Natural killer cell (primary cell): ENCODE measurements at regions of chr11 and their contacts with region 1.

Region 1: DNA sequence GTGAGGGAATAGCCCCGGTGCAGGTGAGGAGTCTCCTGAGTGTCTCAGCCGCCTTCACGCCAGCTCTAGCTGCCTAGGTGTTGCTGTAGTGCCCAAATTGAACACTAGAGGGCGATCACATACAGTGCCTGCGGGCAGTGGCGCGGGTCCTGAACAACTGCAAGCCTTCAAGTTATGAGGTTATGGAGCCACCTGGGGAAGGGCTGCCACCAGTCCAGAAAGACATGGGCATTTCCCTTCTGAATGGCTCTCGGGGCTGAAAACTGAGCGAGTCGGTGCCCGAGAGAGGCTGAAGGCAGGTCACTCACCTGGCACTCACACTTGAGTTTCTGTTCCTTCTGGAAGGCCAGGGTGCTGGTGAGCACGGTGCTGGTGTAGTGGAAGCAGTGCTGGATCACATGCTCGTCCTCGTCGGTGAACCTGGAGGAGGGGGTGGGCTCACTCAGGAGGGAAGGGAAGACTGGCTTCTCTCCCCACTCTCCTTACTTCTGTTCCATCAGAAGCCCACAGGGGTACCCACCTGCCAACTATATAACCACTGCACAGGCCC is 88.4 kb downstream of the PDE2A start:
- DNase-seq: peak; percentile 57 to 89
- ATAC-seq: peak; percentile 78 to 82 (median 79)
- H3K4me3 ChIP-seq: no peak overlapping the region
- H3K4me3 Mint-ChIP-seq: peak overlapping the region; percentile 87
- H3K27ac ChIP-seq: no peak overlapping the region
- H3K27ac Mint-ChIP-seq: peak overlapping the region in 1 of 2 donors; percentile 86
- H3K4me1 ChIP-seq: peaks cover 36% of the 10 kb centered on the region
- H3K4me1 Mint-ChIP-seq: peaks cover 37 to 55% of the 10 kb centered on the region in 2 donors
- H3K27me3 ChIP-seq: peaks cover 34% of the 10 kb centered on the region
- H3K27me3 Mint-ChIP-seq: peaks cover 35 to 36% of the 10 kb centered on the region in 2 donors
- CTCF ChIP-seq: peak; percentile 95

Region 2: DNA sequence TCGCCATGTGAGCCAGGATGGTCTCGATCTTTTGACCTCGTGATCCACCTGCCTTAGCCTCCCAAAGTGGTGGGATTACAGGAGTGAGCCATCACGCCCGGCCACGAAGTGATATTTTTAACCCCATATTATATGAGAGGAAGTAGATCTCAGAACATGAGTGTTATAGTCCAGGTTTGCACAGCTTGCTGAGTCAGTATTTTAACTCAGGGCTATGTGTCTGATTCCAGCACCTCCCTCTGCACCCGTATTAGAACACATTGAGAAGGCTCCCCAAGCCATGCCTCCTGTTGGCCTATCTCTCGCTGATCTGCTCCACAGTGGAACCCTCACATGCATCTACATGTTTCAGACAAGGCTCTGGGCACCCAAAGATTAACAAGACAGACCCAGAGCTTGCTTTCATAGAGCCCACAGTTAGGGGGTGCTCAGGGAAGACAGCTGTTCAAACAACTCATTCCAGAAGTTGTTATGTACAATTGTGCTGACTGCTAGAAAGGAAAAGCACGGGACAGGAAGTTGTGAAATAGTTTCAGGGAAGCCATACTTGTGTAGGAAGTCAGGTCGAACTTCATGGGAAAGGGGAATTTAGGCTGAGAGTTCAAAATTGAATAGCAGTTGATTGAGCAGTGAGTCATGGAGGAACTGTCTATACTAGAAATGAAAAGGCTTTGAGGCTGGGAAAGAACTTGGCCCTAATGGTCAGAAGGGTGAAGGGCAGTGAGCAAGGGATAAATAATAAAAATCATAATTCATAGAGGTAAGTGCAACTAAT is 102.2 kb before region 1 on chr11:
- intact Hi-C with region 1: loop called (anchors 2 kb)
- DNase-seq: peak in 1 of 2 donors; percentile 42
- ATAC-seq: peak in 1 of 3 donors; percentile 42
- H3K4me3 ChIP-seq: no peak overlapping the region
- H3K4me3 Mint-ChIP-seq: no peak overlapping the region
- H3K27ac ChIP-seq: no peak overlapping the region
- H3K27ac Mint-ChIP-seq: peak overlapping the region in 1 of 2 donors; percentile 67
- H3K4me1 ChIP-seq: peaks cover 18% of the 10 kb centered on the region
- H3K4me1 Mint-ChIP-seq: peaks cover 15 to 17% of the 10 kb centered on the region in 2 donors
- H3K27me3 ChIP-seq: no peaks in the 10 kb centered on the region
- H3K27me3 Mint-ChIP-seq: no peaks in the 10 kb centered on the region
- CTCF ChIP-seq: no peak

Region 3: GRCh38 chr11:72642884-72643511 is 57.2 kb after region 1 on chr11:
- intact Hi-C with region 1: loop called (anchors 1 kb)
- DNase-seq: peak; percentile 73 to 83
- ATAC-seq: peak; percentile 79 to 85 (median 83)
- H3K4me3 ChIP-seq: peak overlapping the region; percentile 51
- H3K4me3 Mint-ChIP-seq: peak overlapping the region; percentile 89
- H3K27ac ChIP-seq: no peak overlapping the region
- H3K27ac Mint-ChIP-seq: no peak overlapping the region
- H3K4me1 ChIP-seq: peaks cover 19% of the 10 kb centered on the region
- H3K4me1 Mint-ChIP-seq: peaks cover 0 to 7% of the 10 kb centered on the region in 2 donors
- H3K27me3 ChIP-seq: peaks cover 32% of the 10 kb centered on the region
- H3K27me3 Mint-ChIP-seq: peaks cover 0 to 8% of the 10 kb centered on the region in 2 donors
- CTCF ChIP-seq: peak; percentile 98

Region 4: GRCh38 chr11:72683782-72684200 is 98.0 kb after region 1 on chr11:
- intact Hi-C with region 1: loop called (anchors 2 kb)
- DNase-seq: peak; percentile 70 to 78
- ATAC-seq: peak; percentile 74 to 78 (median 76)
- H3K4me3 ChIP-seq: no peak overlapping the region
- H3K4me3 Mint-ChIP-seq: no peak overlapping the region
- H3K27ac ChIP-seq: no peak overlapping the region
- H3K27ac Mint-ChIP-seq: peak overlapping the region in 1 of 2 donors; percentile 61
- H3K4me1 ChIP-seq: peaks cover 5% of the 10 kb centered on the region
- H3K4me1 Mint-ChIP-seq: peaks cover 24 to 44% of the 10 kb centered on the region in 2 donors
- H3K27me3 ChIP-seq: no peaks in the 10 kb centered on the region
- H3K27me3 Mint-ChIP-seq: no peaks in the 10 kb centered on the region
- CTCF ChIP-seq: peak; percentile 91

Region 5: GRCh38 chr11:72848846-72849466 is 263.1 kb after region 1 on chr11:
- intact Hi-C with region 1: loop called (anchors 10 kb)
- DNase-seq: peak in 1 of 2 donors; percentile 75
- ATAC-seq: peak; percentile 64 to 76 (median 68)
- H3K4me3 ChIP-seq: no peak overlapping the region
- H3K4me3 Mint-ChIP-seq: no peak overlapping the region
- H3K27ac ChIP-seq: no peak overlapping the region
- H3K27ac Mint-ChIP-seq: no peak overlapping the region
- H3K4me1 ChIP-seq: no peaks in the 10 kb centered on the region
- H3K4me1 Mint-ChIP-seq: peaks cover 0 to 7% of the 10 kb centered on the region in 2 donors
- H3K27me3 ChIP-seq: no peaks in the 10 kb centered on the region
- H3K27me3 Mint-ChIP-seq: no peaks in the 10 kb centered on the region
- CTCF ChIP-seq: peak; percentile 73

Region 6: DNA sequence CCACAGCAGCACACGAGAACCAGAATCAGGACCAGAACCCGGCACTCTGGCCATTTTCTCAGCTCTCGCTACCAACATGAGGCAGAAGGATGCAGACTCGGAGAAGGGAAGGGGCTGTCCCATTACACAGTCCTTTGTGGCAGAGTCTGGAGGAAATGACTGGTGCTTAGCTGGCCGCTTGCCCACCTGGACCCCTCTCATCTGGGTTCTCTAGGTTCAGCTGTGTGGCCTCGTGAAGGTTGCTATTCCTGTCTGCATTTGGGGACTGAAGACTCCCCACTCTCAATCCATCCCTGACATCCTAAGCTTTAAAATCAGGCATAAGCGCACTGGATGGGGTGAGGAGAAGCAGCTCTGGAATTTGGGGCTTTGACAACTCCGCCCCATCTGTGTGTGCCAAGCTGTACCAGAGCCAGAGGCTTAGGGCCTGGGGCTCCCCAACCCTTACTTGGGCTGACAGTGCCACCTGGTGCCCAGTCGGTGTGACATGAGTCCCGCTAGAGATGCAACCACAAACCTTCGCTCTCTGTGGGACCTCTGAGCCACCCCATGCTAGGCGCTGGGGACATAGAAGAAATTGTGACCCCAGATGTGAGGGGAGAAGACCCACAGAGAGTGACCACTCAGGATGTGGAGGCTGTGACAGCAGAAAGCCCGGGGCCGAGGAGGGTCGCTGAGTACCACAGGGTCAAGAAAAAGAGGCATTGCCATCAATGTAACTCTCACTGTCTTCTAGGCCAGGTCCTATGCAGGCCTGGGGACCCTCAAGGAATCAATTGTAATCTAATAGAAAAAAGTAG is 592.1 kb after region 1 on chr11:
- intact Hi-C with region 1: loop called (anchors 5 kb)
- DNase-seq: peak; percentile 66 to 89
- ATAC-seq: peak; percentile 90 to 99 (median 99)
- H3K4me3 ChIP-seq: no peak overlapping the region
- H3K4me3 Mint-ChIP-seq: no peak overlapping the region
- H3K27ac ChIP-seq: no peak overlapping the region
- H3K27ac Mint-ChIP-seq: no peak overlapping the region
- H3K4me1 ChIP-seq: peaks cover 10% of the 10 kb centered on the region
- H3K4me1 Mint-ChIP-seq: peaks cover 5 to 13% of the 10 kb centered on the region in 2 donors
- H3K27me3 ChIP-seq: no peaks in the 10 kb centered on the region
- H3K27me3 Mint-ChIP-seq: peaks cover 3 to 4% of the 10 kb centered on the region in 2 donors
- CTCF ChIP-seq: peak; percentile 78